BJ (cell line): ENCODE measurements at regions of chr6 and their contacts with region 1.

Region 1: GRCh38 chr6:5143634-5144311 is 58.6 kb downstream of the PPP1R3G start:
- DNase-seq: no peak
- H3K4me3 ChIP-seq: no peak overlapping the region
- H3K27me3 ChIP-seq: no peaks in the 10 kb centered on the region
- CTCF ChIP-seq: peak; percentile 91

Region 2: DNA sequence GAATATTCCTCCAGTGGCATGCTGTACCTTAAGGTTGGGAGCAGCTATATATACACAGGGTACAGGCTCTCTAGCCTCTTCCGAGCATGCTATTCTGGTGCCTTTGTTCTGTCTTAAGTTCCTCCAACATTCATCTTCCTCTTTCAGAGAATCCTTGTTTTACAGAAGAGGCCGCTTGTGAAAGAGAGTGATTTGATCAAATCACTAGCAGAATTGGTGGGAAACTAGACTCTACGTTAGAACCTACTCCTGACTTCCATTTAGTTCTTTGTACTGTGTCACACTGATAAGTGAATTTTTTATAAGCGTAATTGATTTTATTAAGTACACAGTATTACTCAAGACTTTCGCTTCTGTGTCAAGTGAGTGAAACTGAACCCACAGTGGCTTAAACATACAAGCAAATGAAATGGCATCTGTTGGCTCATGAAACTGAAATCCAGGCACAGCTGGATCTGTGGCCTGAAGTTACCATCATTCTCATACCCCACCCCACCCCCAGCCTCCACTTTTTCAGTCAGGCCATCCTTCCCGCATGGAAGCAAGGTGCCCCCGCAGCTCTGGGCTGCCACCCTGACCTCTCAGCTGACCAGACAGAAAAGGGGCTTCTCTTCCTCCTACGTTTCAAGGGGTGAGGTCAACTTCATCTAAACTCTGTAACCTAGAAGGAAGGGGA is 242.2 kb before region 1 on chr6:
- CTCF ChIA-PET with region 1: no interaction called
- POLR2A ChIA-PET with region 1: no interaction called
- DNase-seq: no peak
- H3K4me3 ChIP-seq: no peak overlapping the region
- H3K27me3 ChIP-seq: no peaks in the 10 kb centered on the region
- CTCF ChIP-seq: no peak

Region 3: GRCh38 chr6:5188646-5189045 is 44.9 kb after region 1 on chr6:
- CTCF ChIA-PET with region 1: interaction called, 10 read pairs
- POLR2A ChIA-PET with region 1: no interaction called
- DNase-seq: no peak
- H3K4me3 ChIP-seq: no peak overlapping the region
- H3K27me3 ChIP-seq: no peaks in the 10 kb centered on the region
- CTCF ChIP-seq: no peak

Region 4: GRCh38 chr6:5302995-5303622 is 159.3 kb after region 1 on chr6:
- CTCF ChIA-PET with region 1: interaction called, 12 read pairs
- POLR2A ChIA-PET with region 1: no interaction called
- DNase-seq: no peak
- H3K4me3 ChIP-seq: no peak overlapping the region
- H3K27me3 ChIP-seq: no peaks in the 10 kb centered on the region
- CTCF ChIP-seq: peak; percentile 42

Region 5: DNA sequence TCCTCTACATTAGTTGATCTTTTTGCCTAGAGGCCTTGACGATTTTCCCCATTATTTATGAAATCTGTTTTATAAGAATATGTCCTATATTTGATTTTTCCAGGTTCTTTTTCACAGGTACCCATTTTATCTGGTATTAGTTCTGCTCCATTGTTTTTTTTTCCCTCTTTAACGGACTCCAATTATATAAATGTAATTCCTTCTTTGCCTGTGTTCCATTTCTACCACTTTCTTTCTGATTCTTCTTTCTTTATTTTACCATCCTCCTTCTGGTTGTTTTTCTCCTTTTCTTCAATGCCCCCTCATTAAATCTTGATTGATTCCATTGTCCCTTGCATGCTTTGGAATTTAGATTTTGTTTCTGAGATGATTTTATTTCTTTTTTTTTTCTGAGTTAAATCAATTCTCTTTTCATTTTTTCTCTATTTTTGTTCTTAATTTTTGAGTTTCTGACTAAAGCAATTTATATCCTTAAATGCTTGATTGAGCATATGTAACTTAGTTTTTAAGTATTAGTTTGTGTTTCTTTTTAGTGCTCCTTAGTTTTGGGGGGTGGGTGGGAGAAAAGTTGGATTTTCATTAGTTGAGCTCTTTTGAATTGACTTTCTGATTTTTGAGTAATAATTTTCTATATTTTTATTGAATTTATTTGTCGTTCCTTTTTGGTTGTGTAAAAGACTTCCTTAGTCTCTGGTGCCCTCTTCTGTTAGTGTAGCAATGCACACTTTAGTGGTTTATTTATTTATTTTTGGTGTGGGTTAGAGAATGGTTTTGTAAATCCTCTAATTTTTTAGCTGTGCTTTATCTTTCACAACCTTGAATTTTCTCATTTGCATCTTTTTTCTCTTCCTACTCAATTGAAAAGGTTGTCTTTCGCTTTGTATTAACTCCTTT is 258.3 kb after region 1 on chr6:
- CTCF ChIA-PET with region 1: interaction called, 23 read pairs
- POLR2A ChIA-PET with region 1: no interaction called
- DNase-seq: no peak
- H3K4me3 ChIP-seq: no peak overlapping the region
- H3K27me3 ChIP-seq: no peaks in the 10 kb centered on the region
- CTCF ChIP-seq: peak; percentile 56